Activated CD4-positive, alpha-beta memory T cell treated with anti-CD3 and anti-CD28 coated beads for 36 hours (primary cell): ENCODE measurements at regions of chr16 and their contacts with region 1.

Region 1: DNA sequence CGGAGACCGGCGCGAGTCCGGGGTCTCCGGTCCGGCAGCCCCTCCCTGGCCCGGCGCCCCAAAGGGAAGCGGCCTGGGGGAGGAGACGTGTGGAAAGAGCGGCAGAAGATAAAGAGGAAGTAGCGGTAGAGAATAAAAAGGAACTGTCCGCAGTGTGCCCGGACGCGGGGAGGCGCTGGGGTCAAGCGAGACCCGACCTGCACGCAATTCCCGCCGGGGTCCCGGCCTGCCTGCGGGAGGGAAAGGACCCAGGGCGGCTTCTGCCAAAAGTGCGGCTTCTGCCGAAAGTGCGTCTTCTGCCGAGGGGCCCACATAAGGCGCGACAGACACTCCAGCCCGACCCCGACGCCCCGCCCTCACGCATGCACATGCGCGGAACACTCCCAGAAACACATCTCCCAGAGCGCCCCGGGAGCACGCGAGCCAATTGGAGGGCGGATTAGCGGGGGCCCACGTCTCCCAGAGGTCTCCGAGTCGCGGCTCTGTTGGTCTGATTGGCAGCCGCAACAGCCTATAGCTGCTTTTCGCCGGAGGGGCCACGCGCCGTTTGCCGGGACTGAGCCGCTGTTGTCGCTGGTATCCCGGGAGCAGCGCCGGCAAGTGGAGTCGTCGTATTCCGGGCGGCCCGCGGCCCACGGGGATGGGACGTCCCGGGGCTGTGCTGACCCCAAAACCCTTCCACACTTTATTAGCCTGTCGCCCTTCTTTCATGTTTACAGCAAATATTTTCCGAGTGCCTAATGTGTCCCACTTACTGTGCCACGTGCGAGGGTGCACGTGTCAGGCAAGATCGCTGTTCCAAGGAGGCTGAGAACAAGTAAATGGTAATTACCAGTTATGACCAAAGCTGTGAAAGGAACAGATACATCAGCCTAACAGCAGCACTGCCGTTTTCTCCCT is 8.0 kb upstream of the MEFV start:
- DNase-seq: peak; percentile 99
- H3K4me3 Mint-ChIP-seq: peak overlapping the region; percentile 80
- H3K27ac Mint-ChIP-seq: peak overlapping the region; percentile 93
- H3K4me1 Mint-ChIP-seq: peaks cover 24% of the 10 kb centered on the region
- H3K27me3 Mint-ChIP-seq: no peaks in the 10 kb centered on the region

Region 2: GRCh38 chr16:3150346-3151218 is 113.8 kb before region 1 on chr16:
- CTCF ChIA-PET with region 1: no interaction called
- POLR2A ChIA-PET with region 1: no interaction called
- intact Hi-C with region 1: loop called (anchors 1 kb)
- DNase-seq: peak; percentile 100
- H3K4me3 Mint-ChIP-seq: peak overlapping the region; percentile 84
- H3K27ac Mint-ChIP-seq: peak overlapping the region; percentile 82
- H3K4me1 Mint-ChIP-seq: peaks cover 27% of the 10 kb centered on the region
- H3K27me3 Mint-ChIP-seq: peaks cover 12% of the 10 kb centered on the region

Region 3: GRCh38 chr16:3188925-3189825 is 75.2 kb before region 1 on chr16:
- CTCF ChIA-PET with region 1: interaction called, 3 read pairs
- POLR2A ChIA-PET with region 1: interaction called, 4 read pairs
- intact Hi-C with region 1: loop called (anchors 2 kb)
- DNase-seq: peak; percentile 79
- H3K4me3 Mint-ChIP-seq: peak overlapping the region; percentile 69
- H3K27ac Mint-ChIP-seq: peak overlapping the region; percentile 70
- H3K4me1 Mint-ChIP-seq: peaks cover 46% of the 10 kb centered on the region
- H3K27me3 Mint-ChIP-seq: peaks cover 67% of the 10 kb centered on the region

Region 4: DNA sequence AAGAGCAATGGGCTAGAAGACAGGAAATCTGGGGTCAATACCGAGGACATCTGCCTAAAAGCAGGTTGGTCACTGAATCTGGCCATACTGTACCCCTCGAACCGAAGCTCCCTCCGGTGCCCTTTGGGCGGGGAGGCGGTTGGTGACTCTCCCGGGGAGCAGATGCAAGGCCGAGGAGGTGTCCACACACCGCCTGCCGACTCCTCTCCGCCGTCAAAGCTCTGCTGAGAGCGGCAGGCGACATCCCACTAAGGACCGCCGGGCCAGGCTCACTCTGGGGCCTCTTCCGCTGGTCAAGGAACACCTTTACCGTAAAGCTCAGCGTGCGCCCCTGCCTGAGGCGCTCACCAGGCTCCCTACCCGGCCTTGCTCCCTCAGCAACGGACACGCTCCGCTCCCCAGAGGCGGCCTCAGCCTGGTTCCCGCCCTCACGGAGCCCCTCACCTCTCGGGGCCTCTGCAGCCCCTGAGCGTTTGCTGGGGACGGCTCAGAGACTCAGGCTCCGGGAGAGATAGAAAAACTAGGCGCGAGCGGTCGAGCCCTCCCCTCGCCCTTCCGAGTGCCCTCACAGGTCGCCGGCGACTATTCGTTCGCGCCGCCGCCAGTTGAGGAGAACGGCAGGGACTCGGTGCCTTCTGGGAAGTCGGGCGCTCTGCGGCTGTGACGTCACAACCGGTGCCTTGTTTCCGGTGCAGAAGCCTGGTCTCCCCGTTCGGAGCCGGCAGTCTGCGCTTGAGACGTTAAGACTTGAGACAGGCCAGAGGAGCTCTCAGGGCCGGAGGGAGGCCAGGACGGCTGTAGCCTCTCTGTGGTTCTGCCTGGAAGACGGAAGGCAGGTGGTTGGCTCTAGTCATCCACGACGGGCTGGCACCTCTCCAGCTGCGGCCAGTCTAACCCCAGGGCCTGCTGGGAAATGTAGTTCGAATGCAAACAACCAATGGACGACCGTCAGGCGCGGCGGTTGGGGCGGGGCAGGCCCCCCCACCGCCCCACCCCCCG is 29.5 kb before region 1 on chr16 and contains the start of gene ZNF200:
- CTCF ChIA-PET with region 1: interaction called, 3 read pairs
- POLR2A ChIA-PET with region 1: interaction called, 3 read pairs
- intact Hi-C with region 1: loop called (anchors 1 kb)
- DNase-seq: peak; percentile 97
- H3K4me3 Mint-ChIP-seq: peak within 1 kb of the TSS; percentile 83
- H3K27ac Mint-ChIP-seq: peak within 1 kb of the TSS; percentile 92
- H3K4me1 Mint-ChIP-seq: peaks cover 30% of the 10 kb centered on the region
- H3K27me3 Mint-ChIP-seq: no peaks in the 10 kb centered on the region
- total RNA-seq, gene ZNF200: 10.6 to 11.5 TPM

Region 5: GRCh38 chr16:3400779-3401688 is 136.6 kb after region 1 on chr16 and contains the starts of genes ZNF174 and ZSCAN32:
- CTCF ChIA-PET with region 1: interaction called, 3 read pairs
- POLR2A ChIA-PET with region 1: interaction called, 7 read pairs
- intact Hi-C with region 1: loop called (anchors 1 kb)
- DNase-seq: peak; percentile 100
- H3K4me3 Mint-ChIP-seq: peak within 1 kb of the TSS; percentile 88
- H3K27ac Mint-ChIP-seq: peak within 1 kb of the TSS; percentile 83
- H3K4me1 Mint-ChIP-seq: peaks cover 52% of the 10 kb centered on the region
- H3K27me3 Mint-ChIP-seq: no peaks in the 10 kb centered on the region
- total RNA-seq, gene ZNF174: 6.0 to 7.3 TPM
- total RNA-seq, gene ZSCAN32: 10.9 to 11.9 TPM

Region 6: DNA sequence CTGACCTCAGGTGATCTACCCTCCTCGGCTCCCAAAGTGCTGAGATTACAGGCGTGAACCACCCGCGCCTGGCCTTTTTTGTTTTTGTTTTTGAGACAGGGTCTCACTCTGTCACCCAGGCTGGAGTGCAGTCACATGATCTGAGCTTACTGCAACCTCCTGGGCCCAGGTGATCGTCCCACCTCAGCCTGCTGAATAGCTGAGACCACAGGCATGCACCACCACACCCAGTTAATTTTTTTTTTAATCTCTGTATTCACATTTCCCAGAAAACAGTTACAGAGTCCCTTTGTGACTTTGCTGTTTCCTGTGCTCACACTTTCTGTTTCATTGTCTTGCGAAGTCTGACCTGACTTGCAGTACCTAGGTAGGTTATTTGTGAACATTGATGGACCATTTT is 239.1 kb after region 1 on chr16:
- CTCF ChIA-PET with region 1: interaction called, 3 read pairs
- POLR2A ChIA-PET with region 1: no interaction called
- intact Hi-C with region 1: loop called (anchors 1 kb)
- DNase-seq: peak; percentile 75
- H3K4me3 Mint-ChIP-seq: peak overlapping the region; percentile 65
- H3K27ac Mint-ChIP-seq: peak overlapping the region; percentile 84
- H3K4me1 Mint-ChIP-seq: peaks cover 62% of the 10 kb centered on the region
- H3K27me3 Mint-ChIP-seq: no peaks in the 10 kb centered on the region